Activated CD4-positive, alpha-beta memory T cell treated with anti-CD3 and anti-CD28 coated beads, Interleukin-2, amount 10 ng/mL, durations not matched to agents 7 days and 5 days (primary cell): ENCODE measurements at regions of chr6 and their contacts with region 1.

Region 1: DNA sequence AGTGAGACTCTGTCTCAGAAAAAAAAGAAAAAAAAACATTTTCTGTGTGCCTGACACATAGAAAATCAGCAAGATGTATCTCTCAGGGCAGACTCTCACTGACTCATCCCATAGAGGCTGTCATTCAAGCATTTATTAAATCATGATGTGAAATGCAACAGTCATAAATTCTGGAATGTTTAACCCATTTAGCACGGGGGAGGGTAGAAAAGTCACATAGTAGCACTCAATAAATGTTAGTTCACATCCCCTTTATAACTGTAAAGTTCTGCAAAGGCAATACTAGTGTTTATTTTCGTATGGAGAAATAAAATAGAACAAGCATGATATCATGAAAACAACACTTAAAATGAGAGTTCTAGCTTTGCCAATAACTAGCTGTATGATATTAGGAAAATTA is 15.5 kb upstream of the CARMIL1 start:
- DNase-seq: no peak
- H3K4me3 Mint-ChIP-seq: no peak overlapping the region
- H3K27ac Mint-ChIP-seq: no peak overlapping the region
- H3K4me1 Mint-ChIP-seq: peaks cover 1% of the 10 kb centered on the region
- H3K27me3 Mint-ChIP-seq: peaks cover 16% of the 10 kb centered on the region

Region 2: DNA sequence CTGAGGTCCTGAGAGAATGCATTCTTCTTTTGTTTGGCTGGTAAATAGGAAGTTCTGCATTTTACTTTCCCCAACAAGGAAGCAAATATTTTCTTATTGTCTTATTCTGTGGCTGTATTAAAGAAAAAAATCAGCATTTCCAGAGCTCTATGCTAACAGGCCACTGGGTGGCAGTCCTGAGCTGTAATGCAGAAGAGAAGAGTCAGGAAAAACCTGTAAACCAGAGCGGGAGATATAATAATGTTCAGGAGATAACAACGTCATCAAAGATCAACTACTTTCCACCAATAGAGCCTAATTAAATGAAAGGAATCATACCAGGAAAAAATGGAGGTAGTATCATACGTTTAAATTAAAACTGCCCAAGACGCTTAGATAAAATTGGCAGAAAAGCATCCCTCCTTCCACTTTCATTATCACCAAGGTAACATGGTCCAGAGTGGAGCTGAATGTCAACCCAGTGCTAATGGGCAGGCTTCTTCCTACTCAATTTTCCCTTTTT is 40.1 kb before region 1 on chr6:
- CTCF ChIA-PET with region 1: interaction called, 14 read pairs
- POLR2A ChIA-PET with region 1: no interaction called
- DNase-seq: peak; percentile 66
- H3K4me3 Mint-ChIP-seq: peak overlapping the region; percentile 38
- H3K27ac Mint-ChIP-seq: no peak overlapping the region
- H3K4me1 Mint-ChIP-seq: peaks cover 16% of the 10 kb centered on the region
- H3K27me3 Mint-ChIP-seq: no peaks in the 10 kb centered on the region

Region 3: GRCh38 chr6:25250878-25251277 is 12.8 kb before region 1 on chr6:
- CTCF ChIA-PET with region 1: interaction called, 28 read pairs
- POLR2A ChIA-PET with region 1: no interaction called
- DNase-seq: no peak
- H3K4me3 Mint-ChIP-seq: no peak overlapping the region
- H3K27ac Mint-ChIP-seq: no peak overlapping the region
- H3K4me1 Mint-ChIP-seq: peaks cover 10% of the 10 kb centered on the region
- H3K27me3 Mint-ChIP-seq: peaks cover 5% of the 10 kb centered on the region

Region 4: DNA sequence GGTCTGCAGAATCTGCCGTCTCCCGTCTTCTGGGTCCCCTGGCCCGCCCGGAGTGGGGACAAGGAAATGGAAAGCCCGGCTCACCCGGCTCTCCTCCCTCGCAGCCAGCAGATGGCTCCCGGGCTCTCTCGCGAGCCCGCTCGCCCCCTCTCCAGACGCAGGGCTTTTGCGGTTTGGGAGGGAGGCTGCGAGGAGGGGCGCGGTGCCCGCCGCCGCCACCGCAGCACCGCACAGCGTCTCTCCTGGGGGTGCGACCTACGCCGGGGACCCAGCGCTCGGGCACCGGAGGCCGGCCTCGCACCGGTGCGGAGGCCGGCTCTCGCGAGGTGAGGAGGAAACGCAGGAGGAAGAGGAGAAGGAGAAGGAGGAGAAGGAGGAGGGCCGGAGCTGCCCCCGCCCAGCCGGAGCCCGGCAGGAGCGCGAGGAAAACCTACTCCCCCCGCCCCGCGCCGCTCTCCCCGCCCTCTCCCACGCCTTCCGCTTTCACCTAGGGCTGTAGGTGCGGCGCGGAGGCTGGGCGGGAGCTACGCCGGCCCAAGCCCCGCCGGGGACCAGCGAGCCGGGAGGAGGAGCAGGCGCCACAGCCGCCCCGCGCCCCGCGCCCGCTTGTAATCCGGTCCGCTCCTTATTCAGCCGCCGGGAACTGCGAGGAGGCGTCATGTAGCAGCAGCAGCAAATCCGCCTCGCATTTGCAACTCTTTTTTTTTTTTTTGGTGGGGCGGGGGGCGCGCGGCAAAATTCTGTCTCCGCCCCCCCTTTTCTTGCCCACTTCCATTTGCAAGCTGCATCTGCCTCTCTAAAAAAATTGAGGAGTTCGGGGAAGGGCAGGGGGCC is 15.5 kb after region 1 on chr6 and contains the start of gene CARMIL1:
- CTCF ChIA-PET with region 1: interaction called, 30 read pairs
- POLR2A ChIA-PET with region 1: no interaction called
- DNase-seq: peak; percentile 69
- H3K4me3 Mint-ChIP-seq: peak within 1 kb of the TSS; percentile 75
- H3K27ac Mint-ChIP-seq: no peak within 1 kb of the TSS
- H3K4me1 Mint-ChIP-seq: peaks cover 20% of the 10 kb centered on the region
- H3K27me3 Mint-ChIP-seq: peaks cover 19% of the 10 kb centered on the region
- total RNA-seq, gene CARMIL1: 1.3 to 1.5 TPM

Region 5: GRCh38 chr6:25490018-25490801 is 226.6 kb after region 1 on chr6:
- CTCF ChIA-PET with region 1: interaction called, 125 read pairs
- POLR2A ChIA-PET with region 1: interaction called, 9 read pairs
- DNase-seq: peak; percentile 70
- H3K4me3 Mint-ChIP-seq: no peak overlapping the region
- H3K27ac Mint-ChIP-seq: no peak overlapping the region
- H3K4me1 Mint-ChIP-seq: peaks cover 4% of the 10 kb centered on the region
- H3K27me3 Mint-ChIP-seq: no peaks in the 10 kb centered on the region